Activated CD4-positive, alpha-beta T cell treated with anti-CD3 and anti-CD28 coated beads for 36 hours (primary cell): ENCODE measurements at regions of chr1 and their contacts with region 1.

Region 1: DNA sequence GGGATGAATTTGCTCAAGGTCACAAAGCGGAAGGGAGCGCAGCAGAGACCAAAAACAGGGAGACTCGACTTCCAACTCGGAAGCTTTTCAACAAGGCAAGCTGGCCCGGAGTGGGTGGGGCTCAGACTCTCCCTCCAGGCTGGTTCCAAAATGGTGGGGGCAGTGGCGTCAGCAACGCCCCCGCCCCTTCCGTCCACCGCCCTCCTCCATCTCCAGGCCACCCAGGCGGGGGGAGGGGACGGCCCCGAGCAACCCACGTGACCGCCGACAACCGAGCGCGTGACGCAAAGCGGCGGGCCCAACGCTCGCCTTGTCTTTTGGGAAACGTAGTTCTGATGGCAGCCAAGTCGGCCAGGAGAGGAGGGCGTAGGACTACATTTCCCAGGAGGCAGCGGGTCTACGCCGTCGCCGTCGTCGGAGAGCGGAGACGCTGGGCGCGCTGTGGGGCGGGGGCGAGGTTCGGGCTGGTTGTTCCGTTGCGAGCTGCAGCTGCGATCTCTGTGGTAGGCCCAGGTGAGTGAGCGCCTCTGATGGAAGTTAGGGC is at the start of gene THRAP3:
- DNase-seq: peak; percentile 100
- ATAC-seq: peak; percentile 93
- H3K4me3 Mint-ChIP-seq: peak within 1 kb of the TSS; percentile 96
- H3K27ac Mint-ChIP-seq: peak within 1 kb of the TSS; percentile 100
- H3K4me1 Mint-ChIP-seq: peaks cover 28% of the 10 kb centered on the region
- H3K27me3 Mint-ChIP-seq: no peaks in the 10 kb centered on the region
- total RNA-seq, gene THRAP3: 149 to 182 TPM

Region 2: GRCh38 chr1:35192853-35193664 is 1031.0 kb before region 1 on chr1 and contains the start of gene SFPQ:
- CTCF ChIA-PET with region 1: no interaction called
- POLR2A ChIA-PET with region 1: no interaction called
- intact Hi-C with region 1: loop called in 1 of 2 experiments (anchors 1 kb)
- DNase-seq: peak; percentile 96
- ATAC-seq: peak; percentile 96
- H3K4me3 Mint-ChIP-seq: peak within 1 kb of the TSS; percentile 90
- H3K27ac Mint-ChIP-seq: peak within 1 kb of the TSS; percentile 98
- H3K4me1 Mint-ChIP-seq: peaks cover 32% of the 10 kb centered on the region
- H3K27me3 Mint-ChIP-seq: no peaks in the 10 kb centered on the region
- total RNA-seq, gene SFPQ: 350 to 389 TPM

Region 3: DNA sequence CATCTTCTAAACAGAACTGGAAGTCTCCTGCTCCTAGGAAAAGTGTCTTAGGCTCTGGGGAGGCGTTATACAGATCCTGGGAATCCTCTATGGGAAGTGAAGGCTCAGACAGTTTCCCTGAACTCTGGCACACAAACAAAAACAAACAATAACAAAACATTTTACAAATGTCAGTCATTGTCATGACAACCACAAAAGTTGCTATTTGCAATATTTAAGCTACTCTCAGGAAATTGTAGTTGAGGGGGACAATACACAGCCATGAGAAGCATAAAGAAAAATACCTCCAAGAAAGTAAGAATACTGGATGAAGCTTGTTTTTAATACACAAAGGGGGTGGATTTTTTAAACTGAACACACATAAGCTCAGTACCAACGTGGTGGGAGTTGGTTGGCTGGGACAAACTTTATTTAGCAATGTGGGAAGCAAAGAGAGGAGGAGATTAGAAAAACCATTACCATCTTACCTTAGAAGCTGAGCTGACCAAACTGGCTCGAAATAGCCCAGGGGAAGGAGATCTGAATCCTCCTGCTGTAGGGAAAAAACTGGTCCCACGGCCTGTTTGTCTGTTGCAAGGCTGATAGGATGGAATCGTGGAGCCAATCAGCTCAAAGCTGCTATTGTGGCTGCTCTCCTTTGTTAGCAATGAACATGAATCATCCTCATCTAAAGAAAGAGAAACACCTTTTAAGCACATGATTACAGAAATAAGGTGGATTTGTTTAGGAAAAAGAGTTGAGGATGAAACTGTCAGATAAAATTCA is 475.9 kb before region 1 on chr1:
- CTCF ChIA-PET with region 1: no interaction called
- POLR2A ChIA-PET with region 1: no interaction called
- intact Hi-C with region 1: no loop called
- DNase-seq: no peak
- ATAC-seq: no peak
- H3K4me3 Mint-ChIP-seq: no peak overlapping the region
- H3K27ac Mint-ChIP-seq: no peak overlapping the region
- H3K4me1 Mint-ChIP-seq: no peaks in the 10 kb centered on the region
- H3K27me3 Mint-ChIP-seq: no peaks in the 10 kb centered on the region

Region 4: GRCh38 chr1:35930593-35931445 is 293.2 kb before region 1 on chr1 and contains the start of gene AGO3:
- CTCF ChIA-PET with region 1: no interaction called
- POLR2A ChIA-PET with region 1: no interaction called
- intact Hi-C with region 1: loop called in 1 of 2 experiments (anchors 1 kb)
- DNase-seq: peak; percentile 95
- ATAC-seq: peak; percentile 95
- H3K4me3 Mint-ChIP-seq: peak within 1 kb of the TSS; percentile 92
- H3K27ac Mint-ChIP-seq: peak within 1 kb of the TSS; percentile 94
- H3K4me1 Mint-ChIP-seq: peaks cover 37% of the 10 kb centered on the region
- H3K27me3 Mint-ChIP-seq: no peaks in the 10 kb centered on the region
- total RNA-seq, gene AGO3: 23.3 to 33.8 TPM

Region 5: DNA sequence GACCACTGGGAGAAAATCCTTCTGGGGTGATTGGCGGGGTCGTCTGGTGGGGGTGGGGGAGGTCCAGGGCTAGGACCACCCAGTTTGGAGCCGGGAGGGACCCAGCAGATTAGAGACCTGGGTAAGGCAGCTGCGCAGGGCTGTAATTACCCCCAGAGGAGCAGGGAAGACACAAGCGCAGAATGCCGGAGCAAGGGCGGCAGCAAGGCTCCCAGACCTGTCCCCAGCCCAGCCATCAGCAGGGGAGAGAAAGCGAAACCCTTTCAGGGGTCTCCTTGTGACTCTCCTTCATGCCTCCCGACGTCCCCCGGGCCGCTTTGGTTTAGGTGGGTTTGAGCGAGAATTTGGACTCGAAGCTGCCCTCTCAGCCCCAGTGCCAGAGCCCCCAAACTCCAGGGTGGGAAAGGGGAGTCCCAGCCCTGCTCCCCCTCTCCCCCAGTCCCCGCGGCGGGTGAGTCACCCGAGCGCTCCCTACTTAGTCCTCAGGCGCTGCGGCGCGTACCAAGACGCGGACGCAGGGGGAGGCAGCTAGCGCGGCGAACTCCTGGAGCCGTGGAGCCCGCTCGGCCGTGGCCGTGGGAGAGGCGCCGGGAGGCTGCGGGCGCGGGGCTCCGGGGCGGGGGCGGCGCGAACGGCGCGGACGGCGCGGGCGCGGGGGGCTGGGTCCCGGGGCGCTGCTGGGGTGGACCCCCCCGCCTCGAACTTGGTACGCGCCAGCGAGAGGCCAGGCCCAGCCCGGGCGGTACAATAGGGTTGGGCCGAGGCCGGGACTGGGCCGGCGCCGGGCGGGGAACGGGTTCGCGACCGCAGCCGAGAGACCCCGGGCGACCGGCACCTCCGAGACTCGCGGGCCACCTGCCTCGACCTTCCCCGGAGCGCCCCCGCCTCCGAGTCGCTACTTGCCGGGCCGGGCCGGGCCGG is 68.4 kb before region 1 on chr1 and contains the start of gene MAP7D1:
- CTCF ChIA-PET with region 1: interaction called, 32 read pairs
- POLR2A ChIA-PET with region 1: interaction called, 14 read pairs
- intact Hi-C with region 1: loop called in 1 of 2 experiments (anchors 1 kb)
- DNase-seq: peak; percentile 92
- ATAC-seq: peak; percentile 57
- H3K4me3 Mint-ChIP-seq: peak within 1 kb of the TSS; percentile 88
- H3K27ac Mint-ChIP-seq: peak within 1 kb of the TSS; percentile 90
- H3K4me1 Mint-ChIP-seq: peaks cover 68% of the 10 kb centered on the region
- H3K27me3 Mint-ChIP-seq: no peaks in the 10 kb centered on the region
- total RNA-seq, gene MAP7D1: 122 to 133 TPM

Region 6: DNA sequence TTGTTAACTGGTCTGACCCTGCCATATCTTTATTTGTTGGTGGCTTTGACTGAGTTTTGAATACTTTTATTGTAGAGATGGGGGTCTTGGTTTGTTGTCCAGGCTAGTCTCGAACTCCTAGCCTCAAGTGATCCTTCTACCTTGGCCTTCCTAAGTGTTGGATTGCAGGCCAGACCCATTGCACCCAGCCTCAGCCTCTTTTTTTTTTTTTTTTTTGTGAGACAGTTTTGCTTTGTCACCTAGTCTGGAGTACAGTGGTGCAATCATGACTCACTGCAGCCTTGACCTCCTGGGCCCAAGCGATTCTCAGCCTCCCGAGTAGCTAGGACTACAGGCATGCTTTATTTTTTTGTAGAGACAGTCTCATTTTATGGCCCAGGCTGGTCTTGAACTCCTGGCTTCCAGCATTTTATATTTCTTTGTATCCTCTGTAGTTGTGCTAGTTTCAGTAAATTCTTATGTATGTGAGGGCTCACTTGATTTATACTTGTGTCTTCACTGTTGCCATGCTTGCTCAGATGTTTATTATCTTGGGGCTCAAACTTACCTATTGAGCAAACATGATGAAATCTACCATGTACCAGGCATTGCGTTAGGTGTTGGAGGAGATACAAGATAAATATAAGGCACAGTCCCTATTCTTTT is 24.3 kb after region 1 on chr1:
- CTCF ChIA-PET with region 1: interaction called, 12 read pairs
- POLR2A ChIA-PET with region 1: interaction called, 5 read pairs
- intact Hi-C with region 1: no loop called
- DNase-seq: peak; percentile 15
- ATAC-seq: peak; percentile 33
- H3K4me3 Mint-ChIP-seq: no peak overlapping the region
- H3K27ac Mint-ChIP-seq: peak overlapping the region; percentile 60
- H3K4me1 Mint-ChIP-seq: peaks cover 54% of the 10 kb centered on the region
- H3K27me3 Mint-ChIP-seq: no peaks in the 10 kb centered on the region

Region 7: GRCh38 chr1:36306902-36307456 is 82.9 kb after region 1 on chr1:
- CTCF ChIA-PET with region 1: interaction called, 4 read pairs
- POLR2A ChIA-PET with region 1: interaction called, 3 read pairs
- intact Hi-C with region 1: loop called in 1 of 2 experiments (anchors 1 kb)
- DNase-seq: peak; percentile 96
- ATAC-seq: peak; percentile 91
- H3K4me3 Mint-ChIP-seq: peak overlapping the region; percentile 98
- H3K27ac Mint-ChIP-seq: peak overlapping the region; percentile 96
- H3K4me1 Mint-ChIP-seq: peaks cover 45% of the 10 kb centered on the region
- H3K27me3 Mint-ChIP-seq: no peaks in the 10 kb centered on the region

Region 8: GRCh38 chr1:36463803-36464604 is 239.9 kb after region 1 on chr1 and contains the start of gene MRPS15:
- CTCF ChIA-PET with region 1: no interaction called
- POLR2A ChIA-PET with region 1: interaction called, 3 read pairs
- intact Hi-C with region 1: loop called in 1 of 2 experiments (anchors 1 kb)
- DNase-seq: peak; percentile 98
- ATAC-seq: peak; percentile 94
- H3K4me3 Mint-ChIP-seq: peak within 1 kb of the TSS; percentile 97
- H3K27ac Mint-ChIP-seq: peak within 1 kb of the TSS; percentile 97
- H3K4me1 Mint-ChIP-seq: peaks cover 31% of the 10 kb centered on the region
- H3K27me3 Mint-ChIP-seq: no peaks in the 10 kb centered on the region
- total RNA-seq, gene MRPS15: 123 to 169 TPM

Region 9: GRCh38 chr1:36567601-36568341 is 343.7 kb after region 1 on chr1:
- CTCF ChIA-PET with region 1: no interaction called
- POLR2A ChIA-PET with region 1: no interaction called
- intact Hi-C with region 1: no loop called
- DNase-seq: no peak
- ATAC-seq: no peak
- H3K4me3 Mint-ChIP-seq: no peak overlapping the region
- H3K27ac Mint-ChIP-seq: no peak overlapping the region
- H3K4me1 Mint-ChIP-seq: no peaks in the 10 kb centered on the region
- H3K27me3 Mint-ChIP-seq: peaks cover 5% of the 10 kb centered on the region

Region 10: DNA sequence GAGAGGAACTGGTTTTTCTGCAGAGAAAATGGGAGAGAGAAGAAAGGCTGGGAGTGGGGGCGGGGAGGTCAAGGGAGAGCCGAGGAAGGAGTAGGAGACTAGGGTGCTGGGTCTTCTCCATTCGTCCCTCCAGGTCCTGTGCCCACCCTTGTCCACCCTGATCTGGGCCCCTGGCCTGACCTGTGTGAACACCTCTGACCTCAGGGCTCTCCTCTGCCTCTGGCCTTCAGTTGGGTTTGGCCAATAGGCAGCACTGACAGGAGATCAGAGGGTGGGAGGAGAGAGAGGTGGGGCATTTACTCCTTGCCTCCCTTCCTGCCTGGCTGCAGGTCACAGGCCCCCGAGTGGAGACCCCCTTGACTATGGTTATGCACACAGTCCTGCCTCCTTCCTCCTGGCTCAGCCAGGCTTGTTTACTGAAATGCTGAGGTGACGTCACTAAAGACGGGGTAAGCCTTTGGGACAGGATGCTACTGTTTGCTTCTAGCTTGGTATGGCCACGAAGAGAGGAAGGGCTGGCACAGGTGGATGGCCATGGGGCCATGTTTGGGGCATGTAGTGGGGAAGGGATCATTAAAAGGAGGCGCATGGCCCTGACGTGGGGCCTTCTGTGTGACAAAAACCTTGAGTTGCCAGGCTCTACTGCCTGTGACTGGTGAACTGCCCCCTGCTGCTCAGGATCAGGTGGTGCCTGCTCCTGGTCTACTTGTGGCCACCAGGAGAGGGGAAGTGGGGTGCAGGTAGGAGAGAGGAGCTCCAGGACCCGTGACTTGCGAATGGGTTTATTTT is 507.4 kb after region 1 on chr1:
- CTCF ChIA-PET with region 1: no interaction called
- POLR2A ChIA-PET with region 1: no interaction called
- intact Hi-C with region 1: no loop called
- DNase-seq: peak; percentile 15
- ATAC-seq: no peak
- H3K4me3 Mint-ChIP-seq: no peak overlapping the region
- H3K27ac Mint-ChIP-seq: no peak overlapping the region
- H3K4me1 Mint-ChIP-seq: no peaks in the 10 kb centered on the region
- H3K27me3 Mint-ChIP-seq: peaks cover 18% of the 10 kb centered on the region